IMR-90 (cell line): ENCODE measurements at regions of chr20 and their contacts with region 1.

Region 1: GRCh38 chr20:63553933-63554290 is at the start of gene FNDC11:
- DNase-seq: no peak
- ATAC-seq: peak; percentile 60
- H3K4me3 ChIP-seq: peak within 1 kb of the TSS; percentile 63
- H3K27ac ChIP-seq: no peak within 1 kb of the TSS
- H3K4me1 ChIP-seq: peaks cover 5% of the 10 kb centered on the region; the same call in 1 of the 2 replicates
- H3K27me3 ChIP-seq: peaks cover 5% of the 10 kb centered on the region; the same call in 1 of the 2 replicates
- CTCF ChIP-seq: no peak
- POLR2A ChIP-seq: no peak
- RAD21 ChIP-seq: no peak
- total RNA-seq, gene FNDC11: 0.28 and 0.36 TPM in 2 replicates

Region 2: DNA sequence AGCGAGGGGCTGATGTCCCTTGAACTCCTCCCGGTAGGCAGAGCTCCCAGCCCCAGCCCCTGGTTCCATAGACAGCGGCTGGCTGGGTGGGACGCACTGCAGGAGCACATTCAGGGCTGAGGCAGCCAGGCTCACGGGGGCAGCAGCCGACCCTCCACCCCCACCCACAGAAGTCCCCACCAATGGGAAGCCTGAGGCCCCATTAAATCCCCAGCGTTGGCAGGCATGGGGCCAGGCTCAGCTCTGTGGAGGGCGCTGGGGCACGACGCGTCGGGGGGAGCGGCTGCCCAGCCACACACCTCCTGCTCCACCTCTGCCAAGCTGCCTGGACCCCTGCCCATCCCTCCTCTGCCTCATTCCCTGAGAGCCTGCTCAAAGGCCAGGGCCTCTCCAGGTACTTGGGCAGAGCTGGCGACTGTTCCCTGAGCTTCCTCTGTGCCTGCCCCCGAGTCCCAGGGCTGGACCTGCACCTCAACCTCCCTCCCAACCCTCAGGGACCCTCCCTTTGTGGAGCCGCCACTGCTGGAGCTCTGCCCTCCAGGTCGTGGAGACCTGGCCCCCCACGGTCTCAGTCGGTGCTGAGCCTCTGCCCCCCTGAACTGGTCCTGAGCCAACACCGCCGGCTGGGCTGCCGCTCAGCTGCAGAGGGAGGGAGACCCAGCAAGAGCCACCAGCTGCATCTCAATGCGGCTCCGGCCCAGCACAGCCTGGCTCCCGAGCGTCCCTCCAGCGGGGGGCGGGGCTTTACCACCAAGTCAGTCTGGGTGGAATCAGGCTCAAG is 201.9 kb before region 1 on chr20:
- CTCF ChIA-PET with region 1: no interaction called
- POLR2A ChIA-PET with region 1: no interaction called
- dilution Hi-C with region 1: no loop called
- in situ Hi-C with region 1: no loop called
- intact Hi-C with region 1: no loop called
- DNase-seq: no peak
- ATAC-seq: no peak
- H3K4me3 ChIP-seq: no peak overlapping the region
- H3K27ac ChIP-seq: no peak overlapping the region
- H3K4me1 ChIP-seq: no peaks in the 10 kb centered on the region
- H3K27me3 ChIP-seq: peaks cover 8% of the 10 kb centered on the region; the same call in 1 of the 2 replicates
- CTCF ChIP-seq: no peak
- POLR2A ChIP-seq: no peak
- RAD21 ChIP-seq: no peak

Region 3: GRCh38 chr20:63572963-63573838 is 19.3 kb after region 1 on chr20:
- CTCF ChIA-PET with region 1: no interaction called
- POLR2A ChIA-PET with region 1: interaction called, 6 read pairs
- dilution Hi-C with region 1: no loop called
- in situ Hi-C with region 1: no loop called
- intact Hi-C with region 1: loop called (anchors 2 kb)
- DNase-seq: no peak
- ATAC-seq: peak; percentile 33; the same call in 1 of the 2 replicates
- H3K4me3 ChIP-seq: peak overlapping the region; percentile 85
- H3K27ac ChIP-seq: peak overlapping the region; percentile 75
- H3K4me1 ChIP-seq: peaks cover 10% of the 10 kb centered on the region
- H3K27me3 ChIP-seq: no peaks in the 10 kb centered on the region
- CTCF ChIP-seq: 0 out of 2 replicates have a peak, but pooled peaks have one; percentile 19
- POLR2A ChIP-seq: no peak
- RAD21 ChIP-seq: no peak

Region 4: DNA sequence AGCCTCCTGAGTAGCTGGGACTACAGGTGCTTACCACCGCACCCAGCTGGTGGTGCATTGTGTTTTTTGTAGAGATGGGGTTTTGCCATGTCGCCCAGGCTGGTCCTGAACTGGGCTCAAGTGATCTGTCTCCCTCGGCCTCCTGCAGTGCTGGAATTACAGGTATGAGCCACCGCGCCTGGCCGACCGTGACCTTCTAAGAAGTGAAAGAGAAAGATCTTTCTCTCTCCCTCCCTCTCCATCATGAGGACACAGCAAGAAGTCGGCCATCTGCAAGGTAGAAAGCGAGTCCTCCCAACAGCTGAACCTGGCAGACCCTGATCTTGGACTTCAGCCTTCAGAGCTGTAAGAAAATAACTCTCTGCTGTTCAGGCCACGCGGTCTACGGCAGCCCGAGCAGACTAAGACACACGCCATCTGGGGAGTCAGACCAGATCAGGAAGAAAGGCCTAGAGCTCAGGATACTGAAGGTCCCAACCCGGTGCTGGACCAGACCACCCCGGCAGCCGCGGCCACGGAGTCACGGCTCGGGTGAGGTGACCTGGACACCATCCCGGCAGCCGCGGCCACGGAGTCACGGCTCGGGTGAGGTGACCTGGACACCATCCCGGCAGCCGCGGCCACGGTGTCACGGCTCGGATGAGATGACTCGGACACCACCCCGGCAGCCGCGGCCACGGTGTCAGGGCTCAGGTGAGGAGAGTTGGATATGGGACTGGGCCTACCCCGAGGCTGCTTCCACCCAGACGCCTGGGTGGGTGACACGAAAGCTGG is 63.4 kb after region 1 on chr20:
- CTCF ChIA-PET with region 1: no interaction called
- POLR2A ChIA-PET with region 1: no interaction called
- dilution Hi-C with region 1: no loop called
- in situ Hi-C with region 1: no loop called
- intact Hi-C with region 1: no loop called
- DNase-seq: no peak
- ATAC-seq: no peak
- H3K4me3 ChIP-seq: no peak overlapping the region
- H3K27ac ChIP-seq: no peak overlapping the region
- H3K4me1 ChIP-seq: no peaks in the 10 kb centered on the region
- H3K27me3 ChIP-seq: no peaks in the 10 kb centered on the region
- CTCF ChIP-seq: no peak
- POLR2A ChIP-seq: no peak
- RAD21 ChIP-seq: no peak